Naive thymus-derived CD8-positive, alpha-beta T cell (primary cell): ENCODE measurements at regions of chr7 and their contacts with region 1.

Region 1: GRCh38 chr7:100889761-100890634 is 483 bp upstream of the UFSP1 start:
- DNase-seq: peak; percentile 85 to 94 (median 91)
- ATAC-seq: peak; percentile 88 to 89
- H3K4me3 Mint-ChIP-seq: peak overlapping the region; percentile 82 to 94 (median 86)
- H3K27ac Mint-ChIP-seq: peak overlapping the region in 8 of 10 donors; percentile 25 to 88 (median 79)
- H3K4me1 Mint-ChIP-seq: peaks cover 22 to 56% (median 48%) of the 10 kb centered on the region in 4 donors
- H3K27me3 Mint-ChIP-seq: peaks cover 3 to 32% (median 12%) of the 10 kb centered on the region in 5 donors

Region 2: DNA sequence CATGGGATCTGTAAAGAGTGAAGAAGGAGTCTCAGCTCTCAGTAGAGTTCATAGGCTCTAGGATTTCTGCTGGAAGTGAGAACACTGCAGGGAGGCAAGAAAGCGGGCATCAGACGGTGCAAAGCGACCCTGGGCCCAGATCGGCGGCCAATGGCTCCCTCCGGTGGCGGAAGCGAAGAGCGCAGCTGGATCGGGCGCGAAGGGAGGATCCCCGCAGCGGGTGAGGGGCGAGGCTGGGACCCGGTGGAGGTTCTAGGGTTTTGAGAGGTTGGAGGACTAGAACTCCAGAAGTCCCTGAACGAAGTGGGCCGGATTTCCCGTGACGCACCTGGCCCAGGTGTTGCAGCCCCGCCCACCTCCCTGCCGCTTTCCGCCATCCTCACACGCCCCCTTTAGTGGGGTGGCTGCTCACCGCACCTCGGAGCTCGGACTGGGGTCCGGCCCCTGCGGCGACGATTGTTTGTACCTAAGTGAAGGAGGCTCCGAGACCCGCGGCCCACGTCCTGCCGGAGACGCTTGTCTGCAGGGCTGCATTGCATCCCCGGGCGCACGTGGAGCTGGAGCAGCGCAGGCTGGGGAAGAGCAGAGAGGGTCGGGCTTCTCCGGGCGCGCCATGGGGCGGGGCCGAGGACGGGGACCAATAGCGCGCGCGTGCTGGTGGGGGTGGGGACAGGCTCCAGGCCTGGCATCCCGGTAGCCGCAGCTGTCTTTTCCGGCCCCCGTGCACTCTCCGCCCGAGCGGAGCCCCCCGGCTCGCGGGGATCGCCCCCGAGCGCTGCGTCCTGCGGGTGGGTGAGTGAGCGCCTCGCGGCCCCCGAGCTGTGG is 37.7 kb before region 1 on chr7 and contains the start of gene SLC12A9:
- POLR2A ChIA-PET with region 1: interaction called, 33 read pairs
- DNase-seq: peak; percentile 72 to 90 (median 83)
- ATAC-seq: peak; percentile 92 to 95
- H3K4me3 Mint-ChIP-seq: peak within 1 kb of the TSS; percentile 87 to 95 (median 92)
- H3K27ac Mint-ChIP-seq: peak within 1 kb of the TSS; percentile 79 to 98 (median 90)
- H3K4me1 Mint-ChIP-seq: peaks cover 12 to 39% (median 28%) of the 10 kb centered on the region in 4 donors
- H3K27me3 Mint-ChIP-seq: no peaks in the 10 kb centered on the region
- polyA plus RNA-seq, gene SLC12A9: 6.8 to 9.4 (median 8.0) TPM

Region 3: DNA sequence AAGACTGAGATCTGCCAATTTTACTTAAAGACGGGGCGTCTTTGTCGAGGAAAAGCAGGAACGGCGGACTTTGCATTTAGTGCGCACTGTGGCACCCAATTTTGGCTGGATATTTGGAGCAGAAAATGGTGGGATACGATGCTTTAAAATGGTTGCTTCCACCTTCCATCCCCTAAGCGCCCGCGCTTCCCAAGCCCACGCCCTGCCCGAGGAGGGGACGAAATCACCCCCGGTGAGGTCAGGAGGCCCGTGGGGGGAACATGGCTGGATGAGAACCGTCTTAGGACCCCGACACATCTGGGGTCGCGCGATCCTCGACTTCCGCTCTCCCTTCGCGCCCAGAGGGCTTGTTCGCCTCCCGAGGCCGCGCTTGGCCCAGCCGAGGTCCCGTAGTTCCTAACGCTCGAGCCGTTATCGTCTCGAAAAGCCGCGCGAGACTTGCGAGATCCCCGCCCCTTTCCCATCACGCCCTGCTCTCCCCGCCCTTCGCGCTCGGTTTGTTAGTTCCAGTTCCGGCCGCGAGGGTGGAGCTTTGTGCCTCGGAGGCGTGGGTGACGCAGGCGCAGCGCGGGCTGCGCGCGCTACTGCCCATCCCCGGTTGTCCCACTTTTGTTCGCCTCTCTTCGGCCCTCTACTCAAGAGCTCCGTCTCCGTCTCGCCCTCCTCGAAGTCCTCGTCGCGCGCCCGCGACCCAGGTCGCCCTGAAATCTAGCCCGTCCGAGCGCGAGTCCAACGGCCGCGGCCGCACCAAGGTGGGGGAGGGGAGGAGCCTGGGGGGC is 15.2 kb before region 1 on chr7 and contains the start of gene SRRT:
- POLR2A ChIA-PET with region 1: interaction called, 165 read pairs
- DNase-seq: peak; percentile 95 to 99 (median 98)
- ATAC-seq: peak; percentile 94 to 95
- H3K4me3 Mint-ChIP-seq: peak within 1 kb of the TSS; percentile 95 to 99 (median 98)
- H3K27ac Mint-ChIP-seq: peak within 1 kb of the TSS; percentile 96 to 99 (median 98)
- H3K4me1 Mint-ChIP-seq: peaks cover 14 to 53% (median 49%) of the 10 kb centered on the region in 4 donors
- H3K27me3 Mint-ChIP-seq: peaks cover 0 to 3% (median 0%) of the 10 kb centered on the region in 5 donors
- polyA plus RNA-seq, gene SRRT: 51.1 to 69.4 (median 63.2) TPM

Region 4: GRCh38 chr7:101085162-101085987 is 195.4 kb after region 1 on chr7 and contains the start of gene TRIM56:
- POLR2A ChIA-PET with region 1: interaction called, 13 read pairs
- DNase-seq: peak; percentile 58 to 87 (median 72)
- ATAC-seq: peak; percentile 93 to 94
- H3K4me3 Mint-ChIP-seq: peak within 1 kb of the TSS; percentile 96 to 100 (median 98)
- H3K27ac Mint-ChIP-seq: peak within 1 kb of the TSS; percentile 98 to 100 (median 99)
- H3K4me1 Mint-ChIP-seq: peaks cover 13 to 47% (median 39%) of the 10 kb centered on the region in 4 donors
- H3K27me3 Mint-ChIP-seq: no peaks in the 10 kb centered on the region
- polyA plus RNA-seq, gene TRIM56: 3.8 to 17.9 (median 11.4) TPM

Region 5: DNA sequence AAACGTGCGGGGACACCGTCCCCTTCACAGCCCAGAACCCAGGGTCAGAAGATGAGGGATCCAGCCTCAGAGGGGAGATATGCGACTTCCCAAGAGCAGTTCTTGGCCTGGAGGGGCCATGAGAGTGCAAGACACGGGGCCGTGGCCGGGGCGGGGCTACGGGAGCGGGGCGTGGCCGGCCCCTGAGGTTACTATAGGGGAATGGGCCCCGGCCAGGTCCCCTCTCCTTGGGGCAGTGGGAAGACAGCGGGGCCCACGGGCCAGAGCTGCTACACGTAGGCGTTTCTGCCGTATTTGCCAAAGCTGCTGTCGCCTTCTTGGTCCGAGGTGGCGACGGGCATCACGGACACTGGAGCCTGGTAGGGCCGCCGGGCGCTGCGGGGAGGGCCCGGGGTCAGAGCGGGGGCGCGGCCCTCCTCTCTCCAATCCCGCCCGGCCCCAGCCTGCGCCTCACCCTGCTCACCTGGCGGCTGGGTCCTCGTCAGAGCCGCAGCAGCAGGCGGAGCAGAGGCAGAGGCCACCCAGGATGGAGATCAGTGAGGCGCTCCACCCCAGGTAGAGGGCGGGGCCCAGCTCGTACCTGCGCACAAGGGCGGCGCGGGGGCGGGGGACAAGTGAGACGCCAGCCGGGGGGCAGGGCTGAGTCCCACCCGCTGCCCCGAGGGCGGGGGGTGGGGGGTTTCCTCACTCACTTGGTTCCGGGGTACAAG is 342.3 kb after region 1 on chr7:
- POLR2A ChIA-PET with region 1: no interaction called
- DNase-seq: peak in 1 of 10 donors; percentile 57
- ATAC-seq: no peak
- H3K4me3 Mint-ChIP-seq: no peak overlapping the region
- H3K27ac Mint-ChIP-seq: peak overlapping the region in 1 of 10 donors; percentile 79
- H3K4me1 Mint-ChIP-seq: peaks cover 2 to 8% (median 7%) of the 10 kb centered on the region in 4 donors
- H3K27me3 Mint-ChIP-seq: no peaks in the 10 kb centered on the region

Region 6: DNA sequence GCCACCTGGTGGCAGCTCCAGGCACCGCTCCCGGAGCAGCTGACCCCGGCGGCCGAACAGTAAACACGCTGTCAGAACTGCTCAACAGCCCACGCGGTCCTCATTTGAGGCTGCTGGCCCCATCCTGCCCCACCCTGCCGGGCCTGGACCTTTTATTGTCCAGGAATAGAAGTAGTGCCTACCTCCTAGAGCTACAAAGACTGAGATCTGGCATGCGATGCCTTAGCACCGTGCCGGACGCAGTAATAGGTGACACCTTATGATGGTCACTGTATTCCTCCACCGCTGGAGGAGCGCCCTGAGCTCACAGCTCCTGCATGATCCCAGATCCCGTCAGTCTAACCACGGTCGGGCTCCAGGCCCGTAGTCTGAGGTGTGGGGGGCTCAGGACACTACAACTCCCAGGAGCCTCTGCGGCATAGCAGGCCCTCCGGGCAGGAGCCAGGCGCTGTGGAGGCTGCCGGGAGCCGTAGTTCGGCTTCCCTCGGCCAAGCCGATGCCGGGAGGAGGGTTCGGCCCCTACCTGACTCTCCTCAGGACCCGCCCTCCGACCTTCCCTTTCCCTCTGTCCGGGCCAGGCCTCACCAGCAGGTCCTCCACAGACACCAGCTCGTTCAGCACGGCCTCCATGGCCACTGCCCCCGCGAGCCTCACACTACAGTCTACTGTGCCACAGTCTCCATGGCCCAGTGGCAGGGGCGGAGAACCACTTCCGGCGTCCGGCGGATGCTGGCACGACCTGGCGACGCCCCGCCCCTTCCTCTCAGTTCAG is 354.6 kb after region 1 on chr7 and contains the start of gene FIS1:
- POLR2A ChIA-PET with region 1: interaction called, 10 read pairs
- DNase-seq: peak; percentile 84 to 98 (median 91)
- ATAC-seq: peak; percentile 95
- H3K4me3 Mint-ChIP-seq: peak within 1 kb of the TSS; percentile 92 to 100 (median 97)
- H3K27ac Mint-ChIP-seq: peak within 1 kb of the TSS; percentile 89 to 99 (median 97)
- H3K4me1 Mint-ChIP-seq: peaks cover 11 to 58% (median 46%) of the 10 kb centered on the region in 4 donors
- H3K27me3 Mint-ChIP-seq: no peaks in the 10 kb centered on the region
- polyA plus RNA-seq, gene FIS1: 225 to 235 (median 228) TPM